ENCODE measurements at regions of chr2 and their contacts with region 1.

Region 1: GRCh38 chr2:107132070-107132469 is 246.1 kb upstream of the ST6GAL2 start:
- DNase-seq: no peak
- H3K4me3 ChIP-seq: peak overlapping the region in 1 of 3 donors; percentile 42
- H3K27ac ChIP-seq: no peak overlapping the region
- H3K4me1 ChIP-seq: no peaks in the 10 kb centered on the region
- H3K27me3 ChIP-seq: no peaks in the 10 kb centered on the region
- CTCF ChIP-seq: no peak
- POLR2A ChIP-seq: no peak

Region 2: DNA sequence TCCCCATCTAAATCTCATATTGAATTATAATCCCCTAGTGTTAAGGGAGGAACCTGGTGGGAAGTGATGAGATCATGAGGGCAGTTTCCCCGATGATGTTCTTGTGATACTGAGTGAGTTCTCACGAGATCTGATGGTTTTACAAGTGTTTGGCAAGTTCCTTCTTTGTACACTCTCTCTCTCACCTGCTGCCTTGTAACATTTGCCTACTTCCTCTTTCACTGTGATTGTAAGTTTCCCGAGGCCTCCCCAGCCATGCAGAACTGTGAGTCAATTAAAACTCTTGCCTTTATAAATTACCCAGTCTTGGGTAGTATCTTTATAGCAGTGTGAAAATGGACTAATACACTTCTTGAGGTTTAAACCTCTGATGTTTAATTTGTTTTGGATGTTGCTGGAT is 467.4 kb before region 1 on chr2:
- intact Hi-C with region 1: loop called (anchors 10 kb)
- DNase-seq: no peak
- H3K4me3 ChIP-seq: no peak overlapping the region
- H3K27ac ChIP-seq: no peak overlapping the region
- H3K4me1 ChIP-seq: no peaks in the 10 kb centered on the region
- H3K27me3 ChIP-seq: no peaks in the 10 kb centered on the region
- CTCF ChIP-seq: no peak
- POLR2A ChIP-seq: no peak

Measured in breast epithelium (tissue), 4 donors.